Activated B cell treated with CpG ODN at 0.5 μM for 24 hours (primary cell): ENCODE measurements at regions of chr7 and their contacts with region 1.

Region 1: DNA sequence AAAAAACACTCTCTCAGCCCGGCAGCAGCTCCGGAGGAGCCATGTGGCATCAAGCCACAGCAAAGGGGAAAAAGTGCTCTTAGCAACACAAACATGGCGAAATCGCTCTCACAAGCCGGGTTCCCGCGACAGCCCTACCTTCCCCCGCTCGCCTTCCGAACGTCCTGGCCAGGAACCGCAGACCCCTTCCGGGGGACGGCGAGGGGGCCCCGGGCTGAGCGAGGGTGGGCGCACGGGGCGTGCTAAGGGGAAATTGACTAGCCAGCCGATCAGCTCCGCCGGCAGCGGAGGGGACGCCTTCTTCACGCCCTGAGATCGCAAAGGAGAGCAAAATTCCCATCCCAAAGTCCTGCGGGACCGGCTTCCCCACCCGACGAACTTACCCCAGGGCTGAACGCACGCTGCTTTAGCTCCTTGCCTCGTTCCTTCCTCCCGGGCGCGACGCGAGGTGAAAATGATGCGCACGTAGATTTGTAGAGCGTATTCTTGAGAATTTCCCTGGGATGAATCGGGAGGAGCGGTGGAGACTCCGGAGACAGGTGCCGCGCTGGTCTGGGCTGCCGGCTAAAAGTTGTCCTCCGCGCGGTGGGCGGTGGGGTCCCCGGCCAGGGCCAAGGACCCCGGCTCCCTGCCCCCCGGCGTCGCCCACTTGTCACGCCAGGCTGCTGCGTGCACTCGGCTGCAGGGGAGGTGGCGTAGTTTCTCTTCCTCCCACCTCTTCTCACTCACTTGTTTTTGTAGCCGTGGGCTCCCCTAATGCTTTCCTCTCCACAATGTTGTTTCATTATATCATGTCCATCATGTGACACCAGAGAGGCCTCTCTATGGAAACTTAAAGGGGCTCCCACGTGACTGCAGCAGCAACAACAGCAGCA is 220.1 kb upstream of the MKLN1 start:
- DNase-seq: peak; percentile 69
- ATAC-seq: peak; percentile 45
- H3K4me3 Mint-ChIP-seq: peak overlapping the region; percentile 99
- H3K27ac Mint-ChIP-seq: peak overlapping the region; percentile 99
- H3K4me1 Mint-ChIP-seq: peaks cover 75% of the 10 kb centered on the region
- H3K27me3 Mint-ChIP-seq: no peaks in the 10 kb centered on the region
- CTCF ChIP-seq: no peak

Region 2: GRCh38 chr7:130941322-130942210 is 166.0 kb before region 1 on chr7:
- CTCF ChIA-PET with region 1: no interaction called
- POLR2A ChIA-PET with region 1: no interaction called
- intact Hi-C with region 1: loop called (anchors 5 kb)
- DNase-seq: no peak
- ATAC-seq: no peak
- H3K4me3 Mint-ChIP-seq: peak overlapping the region; percentile 78
- H3K27ac Mint-ChIP-seq: peak overlapping the region; percentile 84
- H3K4me1 Mint-ChIP-seq: peaks cover 90% of the 10 kb centered on the region
- H3K27me3 Mint-ChIP-seq: no peaks in the 10 kb centered on the region
- CTCF ChIP-seq: no peak

Region 3: DNA sequence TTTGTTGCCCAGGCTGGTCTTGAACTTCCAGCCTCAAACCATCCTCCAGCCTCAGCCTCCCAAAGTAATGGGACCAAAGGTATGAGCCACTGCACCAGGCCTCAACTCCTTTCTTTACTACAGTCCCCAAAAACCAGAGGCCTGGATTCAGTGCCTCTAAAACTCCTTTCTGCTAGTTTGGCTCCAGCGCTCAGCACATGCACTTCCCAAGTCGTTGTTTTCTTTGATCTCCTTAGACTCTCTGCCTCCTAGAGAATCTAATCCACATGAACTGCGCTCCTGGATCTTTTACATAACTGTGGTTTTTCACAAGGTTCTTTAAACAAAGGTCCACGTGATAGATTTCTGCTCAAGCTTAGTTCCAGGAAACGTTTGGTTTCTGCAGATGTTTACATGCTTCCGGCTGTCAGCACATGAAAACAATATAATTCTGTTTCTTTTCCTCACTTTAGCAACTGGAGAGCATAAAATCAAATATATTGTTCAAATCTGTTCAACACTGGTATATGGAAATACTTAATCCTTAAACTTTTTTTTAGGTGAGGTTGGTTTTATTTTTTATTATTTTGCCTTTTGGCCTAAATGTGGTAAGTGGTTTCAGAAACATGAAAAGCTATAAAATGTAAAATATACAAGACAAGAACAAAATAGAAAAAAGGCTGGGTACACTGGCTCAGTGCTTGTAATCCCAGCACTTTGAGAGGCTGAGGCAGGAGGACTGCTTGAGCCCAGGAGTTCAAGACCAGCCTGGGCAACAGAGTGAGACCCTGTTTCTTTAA is 50.4 kb before region 1 on chr7:
- CTCF ChIA-PET with region 1: no interaction called
- POLR2A ChIA-PET with region 1: interaction called, 15 read pairs
- intact Hi-C with region 1: loop called (anchors 2 kb)
- DNase-seq: no peak
- ATAC-seq: peak; percentile 59
- H3K4me3 Mint-ChIP-seq: peak overlapping the region; percentile 76
- H3K27ac Mint-ChIP-seq: peak overlapping the region; percentile 97
- H3K4me1 Mint-ChIP-seq: peaks cover 79% of the 10 kb centered on the region
- H3K27me3 Mint-ChIP-seq: no peaks in the 10 kb centered on the region
- CTCF ChIP-seq: no peak

Region 4: GRCh38 chr7:131124001-131124629 is 16.5 kb after region 1 on chr7:
- CTCF ChIA-PET with region 1: interaction called, 5 read pairs
- POLR2A ChIA-PET with region 1: interaction called, 51 read pairs
- intact Hi-C with region 1: loop called (anchors 1 kb)
- DNase-seq: no peak
- ATAC-seq: peak; percentile 86
- H3K4me3 Mint-ChIP-seq: peak overlapping the region; percentile 52
- H3K27ac Mint-ChIP-seq: peak overlapping the region; percentile 85
- H3K4me1 Mint-ChIP-seq: peaks cover 40% of the 10 kb centered on the region
- H3K27me3 Mint-ChIP-seq: no peaks in the 10 kb centered on the region
- CTCF ChIP-seq: no peak

Region 5: GRCh38 chr7:131251371-131251770 is 143.8 kb after region 1 on chr7:
- CTCF ChIA-PET with region 1: no interaction called
- POLR2A ChIA-PET with region 1: no interaction called
- intact Hi-C with region 1: no loop called
- DNase-seq: no peak
- ATAC-seq: no peak
- H3K4me3 Mint-ChIP-seq: no peak overlapping the region
- H3K27ac Mint-ChIP-seq: no peak overlapping the region
- H3K4me1 Mint-ChIP-seq: no peaks in the 10 kb centered on the region
- H3K27me3 Mint-ChIP-seq: peaks cover 10% of the 10 kb centered on the region
- CTCF ChIP-seq: no peak

Region 6: GRCh38 chr7:131302876-131303707 is 195.5 kb after region 1 on chr7:
- CTCF ChIA-PET with region 1: interaction called, 4 read pairs
- POLR2A ChIA-PET with region 1: interaction called, 7 read pairs
- intact Hi-C with region 1: loop called (anchors 2 kb)
- DNase-seq: no peak
- ATAC-seq: no peak
- H3K4me3 Mint-ChIP-seq: no peak overlapping the region
- H3K27ac Mint-ChIP-seq: no peak overlapping the region
- H3K4me1 Mint-ChIP-seq: no peaks in the 10 kb centered on the region
- H3K27me3 Mint-ChIP-seq: no peaks in the 10 kb centered on the region
- CTCF ChIP-seq: no peak